ENCODE measurements at regions of chr5 and their contacts with region 1.

Region 1: GRCh38 chr5:147576646-147577535 is 67.0 kb upstream of the DPYSL3 start:
- DNase-seq: peak; percentile 49
- H3K4me3 ChIP-seq: peak overlapping the region in 1 of 2 experiments; percentile 29; a peak in 1 of 4 replicates
- H3K27ac ChIP-seq: no peak overlapping the region
- H3K4me1 ChIP-seq: peaks cover 0 to 4% of the 10 kb centered on the region in 2 experiments; a peak in 1 of 4 replicates
- H3K27me3 ChIP-seq: no peaks in the 10 kb centered on the region
- CTCF ChIP-seq: peak; percentile 88
- EP300 ChIP-seq: no peak
- RAD21 ChIP-seq: peak; percentile 69

Region 2: GRCh38 chr5:146533260-146533857 is 1043.5 kb before region 1 on chr5:
- CTCF ChIA-PET with region 1: interaction called, 11 read pairs
- POLR2A ChIA-PET with region 1: no interaction called
- DNase-seq: peak; percentile 71
- H3K4me3 ChIP-seq: no peak overlapping the region; a peak in 1 of 4 replicates
- H3K27ac ChIP-seq: no peak overlapping the region
- H3K4me1 ChIP-seq: no peaks in the 10 kb centered on the region
- H3K27me3 ChIP-seq: no peaks in the 10 kb centered on the region
- CTCF ChIP-seq: peak; percentile 93
- EP300 ChIP-seq: no peak
- RAD21 ChIP-seq: peak; percentile 95

Region 3: GRCh38 chr5:147369742-147370374 is 207.0 kb before region 1 on chr5:
- CTCF ChIA-PET with region 1: interaction called, 18 read pairs
- POLR2A ChIA-PET with region 1: no interaction called
- DNase-seq: no peak
- H3K4me3 ChIP-seq: no peak overlapping the region
- H3K27ac ChIP-seq: peak overlapping the region in 1 of 2 experiments; percentile 34; a peak in 1 of 4 replicates
- H3K4me1 ChIP-seq: no peaks in the 10 kb centered on the region; a peak in 1 of 4 replicates
- H3K27me3 ChIP-seq: no peaks in the 10 kb centered on the region
- CTCF ChIP-seq: peak; percentile 94
- EP300 ChIP-seq: no peak
- RAD21 ChIP-seq: peak; percentile 84

Region 4: GRCh38 chr5:147391781-147392180 is 185.1 kb before region 1 on chr5:
- CTCF ChIA-PET with region 1: interaction called, 10 read pairs
- POLR2A ChIA-PET with region 1: no interaction called
- DNase-seq: peak; percentile 60
- H3K4me3 ChIP-seq: no peak overlapping the region; a peak in 1 of 4 replicates
- H3K27ac ChIP-seq: no peak overlapping the region; a peak in 1 of 4 replicates
- H3K4me1 ChIP-seq: peaks cover 0 to 33% of the 10 kb centered on the region in 2 experiments; a peak in 2 of 4 replicates
- H3K27me3 ChIP-seq: no peaks in the 10 kb centered on the region
- CTCF ChIP-seq: peak; percentile 59
- EP300 ChIP-seq: no peak
- RAD21 ChIP-seq: peak; percentile 76

Region 5: DNA sequence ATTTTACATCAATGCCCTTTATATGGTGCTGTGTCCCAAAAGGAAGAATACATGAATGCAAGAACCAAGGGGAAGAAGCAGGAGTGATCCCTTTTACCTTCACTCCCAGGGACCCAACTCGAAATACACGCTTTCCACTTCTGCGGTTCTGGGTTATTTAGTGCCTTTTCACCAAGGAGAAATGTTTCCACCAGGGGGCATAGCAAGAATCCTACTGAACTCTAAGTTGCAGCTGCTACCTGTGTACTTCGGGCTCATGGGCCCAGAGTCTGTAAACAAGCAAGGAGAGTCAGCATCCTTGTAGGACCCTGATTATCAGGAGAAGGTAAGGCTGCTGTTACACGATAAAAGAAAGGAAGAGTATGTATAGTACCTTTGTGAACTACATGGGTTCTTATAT is 112.7 kb before region 1 on chr5:
- CTCF ChIA-PET with region 1: interaction called, 63 read pairs
- POLR2A ChIA-PET with region 1: no interaction called
- DNase-seq: no peak
- H3K4me3 ChIP-seq: no peak overlapping the region
- H3K27ac ChIP-seq: no peak overlapping the region
- H3K4me1 ChIP-seq: peaks cover 0 to 12% of the 10 kb centered on the region in 2 experiments; a peak in 3 of 4 replicates
- H3K27me3 ChIP-seq: no peaks in the 10 kb centered on the region
- CTCF ChIP-seq: peak; percentile 60
- EP300 ChIP-seq: no peak
- RAD21 ChIP-seq: peak; percentile 69

Region 6: DNA sequence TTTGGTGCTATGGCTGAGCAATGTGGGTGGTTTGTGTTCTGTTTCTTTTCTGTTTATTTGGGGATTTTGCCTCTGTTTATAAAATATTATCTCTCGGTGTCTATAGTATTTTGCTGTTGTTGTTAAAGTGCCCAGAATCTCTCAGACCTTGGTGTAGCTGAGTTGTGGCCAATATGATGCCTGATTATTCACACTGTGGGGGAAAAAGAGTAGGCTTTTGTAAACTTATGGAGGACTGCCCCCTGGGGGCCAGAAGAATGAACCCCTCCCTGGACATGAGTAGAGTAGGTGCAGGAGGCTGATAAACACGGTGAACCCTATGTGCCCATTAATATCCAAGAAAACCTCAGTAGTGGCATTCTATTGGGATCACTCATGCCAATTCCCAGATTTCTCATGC is 18.1 kb before region 1 on chr5:
- CTCF ChIA-PET with region 1: interaction called, 76 read pairs
- POLR2A ChIA-PET with region 1: no interaction called
- DNase-seq: peak; percentile 66
- H3K4me3 ChIP-seq: no peak overlapping the region
- H3K27ac ChIP-seq: no peak overlapping the region
- H3K4me1 ChIP-seq: peaks cover 5 to 13% of the 10 kb centered on the region in 2 experiments; a peak in 2 of 4 replicates
- H3K27me3 ChIP-seq: no peaks in the 10 kb centered on the region
- CTCF ChIP-seq: peak; percentile 88
- EP300 ChIP-seq: no peak
- RAD21 ChIP-seq: peak; percentile 94

Region 7: DNA sequence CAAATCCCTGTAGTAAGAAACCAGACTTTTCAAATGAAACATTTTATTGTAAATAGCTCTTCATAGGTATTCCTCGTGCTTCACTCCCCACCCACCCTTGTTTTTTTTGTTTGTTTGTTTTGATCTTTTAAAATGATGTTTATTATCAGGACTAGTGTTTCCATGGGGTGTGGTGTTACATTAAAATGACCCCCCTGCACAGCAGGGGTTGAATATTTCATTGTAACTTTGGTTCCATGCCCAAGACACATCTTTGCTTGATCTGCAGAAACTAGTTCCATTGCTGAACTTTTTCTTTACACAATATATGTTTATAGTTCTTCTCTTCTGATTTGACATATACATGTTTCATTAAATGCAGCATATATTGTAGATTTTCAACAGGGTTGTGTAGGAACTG is 14.2 kb after region 1 on chr5:
- CTCF ChIA-PET with region 1: interaction called, 10 read pairs
- POLR2A ChIA-PET with region 1: no interaction called
- DNase-seq: no peak
- H3K4me3 ChIP-seq: no peak overlapping the region
- H3K27ac ChIP-seq: no peak overlapping the region
- H3K4me1 ChIP-seq: no peaks in the 10 kb centered on the region
- H3K27me3 ChIP-seq: no peaks in the 10 kb centered on the region
- CTCF ChIP-seq: no peak
- EP300 ChIP-seq: no peak
- RAD21 ChIP-seq: no peak